ENCODE measurements at regions of chr2 and their contacts with region 1.

Region 1: GRCh38 chr2:101001691-101002561 is at the start of gene RPL31:
- DNase-seq: peak; percentile 81 to 98 (median 96)
- ATAC-seq: peak; percentile 94 to 96 (median 95)
- H3K4me3 ChIP-seq: peak within 1 kb of the TSS; percentile 96 to 98
- H3K4me3 Mint-ChIP-seq: peak within 1 kb of the TSS; percentile 88 to 96 (median 95)
- H3K27ac ChIP-seq: peak within 1 kb of the TSS; percentile 87
- H3K27ac Mint-ChIP-seq: peak within 1 kb of the TSS; percentile 96 to 97
- H3K4me1 ChIP-seq: peaks cover 10 to 31% of the 10 kb centered on the region in 2 experiments
- H3K4me1 Mint-ChIP-seq: peaks cover 46 to 49% (median 46%) of the 10 kb centered on the region in 3 donors
- H3K27me3 ChIP-seq: no peaks in the 10 kb centered on the region
- H3K27me3 Mint-ChIP-seq: no peaks in the 10 kb centered on the region
- total RNA-seq, gene RPL31: 1,802 to 2,371 (median 2,279) TPM

Region 2: DNA sequence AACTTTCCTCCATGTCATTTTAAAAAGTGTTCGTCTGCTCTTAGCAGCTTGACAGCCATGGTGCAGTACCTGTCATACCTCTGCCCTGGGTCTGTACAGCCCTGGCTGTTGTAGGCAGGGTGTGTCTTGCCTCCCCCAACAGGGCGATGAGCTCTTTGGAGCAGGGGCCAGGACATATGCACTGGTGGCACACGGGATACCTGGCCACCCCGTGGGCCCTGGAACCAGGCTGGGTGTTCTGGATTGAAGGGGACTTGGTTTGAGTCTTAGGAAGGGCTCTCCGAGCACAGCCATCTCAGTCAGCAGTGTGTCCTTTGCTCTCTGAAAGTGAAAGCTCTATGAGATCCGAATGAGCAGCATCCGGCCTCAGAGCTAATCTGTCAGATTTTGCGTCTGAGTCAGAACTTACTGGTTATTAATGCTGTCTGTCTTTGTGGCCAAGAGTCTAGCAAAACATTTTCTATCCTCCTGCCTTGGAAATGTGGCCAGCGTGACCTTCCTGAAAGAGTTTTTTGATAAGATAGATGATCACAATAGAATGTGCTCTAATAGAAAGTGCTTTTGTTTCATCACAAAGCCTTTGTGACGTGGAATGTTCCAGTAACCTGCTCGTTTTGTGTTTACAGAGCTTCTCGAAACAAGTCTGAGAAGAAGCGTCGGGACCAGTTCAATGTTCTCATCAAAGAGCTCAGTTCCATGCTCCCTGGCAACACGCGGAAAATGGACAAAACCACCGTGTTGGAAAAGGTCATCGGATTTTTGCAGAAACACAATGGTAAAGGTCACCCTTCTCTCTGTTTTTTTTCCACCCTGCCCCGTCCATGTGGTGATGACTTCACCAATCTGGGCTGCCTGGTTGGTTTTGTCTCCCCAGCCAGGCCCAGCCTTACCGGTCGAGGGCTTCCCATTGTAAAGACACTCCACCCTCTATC is 77.1 kb before region 1 on chr2:
- CTCF ChIA-PET with region 1: no interaction called
- POLR2A ChIA-PET with region 1: no interaction called
- DNase-seq: peak in 17 of 35 experiments; percentile 4 to 50 (median 14)
- ATAC-seq: peak; percentile 79 to 93 (median 86)
- H3K4me3 ChIP-seq: peak overlapping the region in 1 of 2 donors; percentile 27
- H3K4me3 Mint-ChIP-seq: peak overlapping the region; percentile 40 to 65 (median 59)
- H3K27ac ChIP-seq: peak overlapping the region; percentile 76
- H3K27ac Mint-ChIP-seq: peak overlapping the region; percentile 89 to 90
- H3K4me1 ChIP-seq: peaks cover 0 to 10% of the 10 kb centered on the region in 2 experiments
- H3K4me1 Mint-ChIP-seq: peaks cover 5 to 19% (median 16%) of the 10 kb centered on the region in 3 donors
- H3K27me3 ChIP-seq: no peaks in the 10 kb centered on the region
- H3K27me3 Mint-ChIP-seq: no peaks in the 10 kb centered on the region

Region 3: GRCh38 chr2:101270700-101271259 is 268.9 kb after region 1 on chr2:
- CTCF ChIA-PET with region 1: no interaction called
- POLR2A ChIA-PET with region 1: interaction called in 1 of 2 experiments, 12 read pairs
- DNase-seq: no peak
- ATAC-seq: no peak
- H3K4me3 ChIP-seq: no peak overlapping the region
- H3K4me3 Mint-ChIP-seq: no peak overlapping the region
- H3K27ac ChIP-seq: peak overlapping the region; percentile 15
- H3K27ac Mint-ChIP-seq: peak overlapping the region; percentile 60 to 62
- H3K4me1 ChIP-seq: peaks cover 9 to 13% of the 10 kb centered on the region in 2 experiments
- H3K4me1 Mint-ChIP-seq: peaks cover 31 to 50% (median 44%) of the 10 kb centered on the region in 3 donors
- H3K27me3 ChIP-seq: no peaks in the 10 kb centered on the region
- H3K27me3 Mint-ChIP-seq: no peaks in the 10 kb centered on the region

Measured in T-cell (primary cell).